HEK293 (cell line): ENCODE measurements at regions of chr3 and their contacts with region 1.

Region 1: DNA sequence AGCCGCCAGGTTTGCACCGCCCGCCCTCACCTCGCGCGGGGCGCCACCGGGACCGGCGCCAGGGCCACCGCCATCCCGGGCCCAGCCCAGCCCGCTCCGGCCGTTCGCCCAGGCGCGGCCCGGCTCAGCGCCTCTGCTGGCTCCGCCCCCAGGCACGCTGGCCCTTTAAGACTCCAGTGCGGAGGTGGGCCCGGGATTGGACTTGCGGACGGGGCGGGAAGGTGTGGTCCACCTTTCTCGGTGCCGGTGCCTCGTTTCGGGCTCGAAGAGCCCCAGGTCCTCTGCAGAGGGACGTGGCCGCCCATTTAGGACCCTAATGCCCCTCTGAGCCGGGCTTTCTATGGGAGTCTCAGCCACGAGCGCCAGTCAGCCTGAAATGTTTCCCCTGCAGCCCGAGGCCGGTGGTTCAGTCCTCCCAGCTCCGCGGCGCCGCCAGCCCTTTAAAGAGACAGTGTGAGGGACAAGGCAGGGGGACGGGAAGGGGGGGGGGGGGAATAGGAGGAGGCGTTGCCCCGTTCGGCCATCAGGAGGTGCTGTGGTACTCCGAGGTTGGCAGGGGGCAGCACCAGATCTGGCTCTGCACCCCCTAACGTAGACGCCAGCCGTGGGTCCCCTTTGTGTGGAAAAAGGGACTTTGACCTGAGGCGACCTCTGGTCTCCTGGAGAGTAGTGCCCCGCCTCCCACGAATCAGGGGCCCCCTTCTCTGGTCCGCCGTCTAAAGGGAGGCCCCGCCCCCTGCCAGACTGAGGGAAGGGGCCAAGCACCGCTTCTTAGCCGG is 1.0 kb downstream of the HYAL2 start:
- H3K4me3 ChIP-seq: peak overlapping the region; percentile 62
- H3K27ac ChIP-seq: peak overlapping the region; percentile 95
- H3K4me1 ChIP-seq: peaks cover 7% of the 10 kb centered on the region; the same call in 1 of the 2 replicates
- CTCF ChIP-seq: peak; percentile 65

Region 2: DNA sequence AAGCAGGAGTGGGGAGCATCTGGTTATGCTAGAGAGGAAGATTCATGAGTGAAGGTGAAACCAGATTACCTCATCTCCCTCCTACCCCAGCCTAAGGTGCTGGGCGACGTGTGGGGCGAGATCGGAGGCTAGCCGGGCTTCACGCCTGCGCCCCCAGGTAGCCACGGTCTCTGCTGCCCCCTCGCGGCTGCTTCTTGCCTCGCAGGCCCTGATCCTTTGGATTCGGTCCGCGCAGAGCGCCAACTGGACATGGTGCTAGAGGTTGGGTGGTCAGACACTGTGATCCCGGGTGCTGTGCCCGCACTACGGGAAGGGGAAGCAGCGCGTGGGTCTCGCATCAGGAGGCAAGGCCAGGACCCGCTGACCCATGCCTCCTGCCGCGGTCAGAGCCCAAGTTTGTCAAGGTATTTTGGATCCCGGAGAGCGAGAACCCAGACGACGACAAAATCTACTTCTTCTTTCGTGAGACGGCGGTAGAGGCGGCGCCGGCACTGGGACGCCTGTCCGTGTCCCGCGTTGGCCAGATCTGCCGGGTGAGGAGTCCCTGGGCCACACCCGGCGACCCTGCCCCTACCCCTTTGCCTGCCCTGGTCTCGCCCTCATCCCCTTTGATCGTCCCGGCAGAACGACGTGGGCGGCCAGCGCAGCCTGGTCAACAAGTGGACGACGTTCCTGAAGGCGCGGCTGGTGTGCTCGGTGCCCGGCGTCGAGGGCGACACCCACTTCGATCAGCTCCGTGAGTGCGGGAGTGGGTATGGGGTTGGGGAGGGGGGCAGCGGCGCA is 48.4 kb before region 1 on chr3:
- CTCF ChIA-PET with region 1: interaction called, 21 read pairs
- POLR2A ChIA-PET with region 1: no interaction called
- H3K4me3 ChIP-seq: no peak overlapping the region
- H3K27ac ChIP-seq: no peak overlapping the region
- H3K4me1 ChIP-seq: no peaks in the 10 kb centered on the region
- CTCF ChIP-seq: peak; percentile 94

Region 3: GRCh38 chr3:50278868-50279224 is 42.7 kb before region 1 on chr3 and contains the start of gene LSMEM2:
- CTCF ChIA-PET with region 1: interaction called, 21 read pairs
- POLR2A ChIA-PET with region 1: no interaction called
- H3K4me3 ChIP-seq: no peak within 1 kb of the TSS
- H3K27ac ChIP-seq: no peak within 1 kb of the TSS
- H3K4me1 ChIP-seq: no peaks in the 10 kb centered on the region
- CTCF ChIP-seq: no peak

Region 4: DNA sequence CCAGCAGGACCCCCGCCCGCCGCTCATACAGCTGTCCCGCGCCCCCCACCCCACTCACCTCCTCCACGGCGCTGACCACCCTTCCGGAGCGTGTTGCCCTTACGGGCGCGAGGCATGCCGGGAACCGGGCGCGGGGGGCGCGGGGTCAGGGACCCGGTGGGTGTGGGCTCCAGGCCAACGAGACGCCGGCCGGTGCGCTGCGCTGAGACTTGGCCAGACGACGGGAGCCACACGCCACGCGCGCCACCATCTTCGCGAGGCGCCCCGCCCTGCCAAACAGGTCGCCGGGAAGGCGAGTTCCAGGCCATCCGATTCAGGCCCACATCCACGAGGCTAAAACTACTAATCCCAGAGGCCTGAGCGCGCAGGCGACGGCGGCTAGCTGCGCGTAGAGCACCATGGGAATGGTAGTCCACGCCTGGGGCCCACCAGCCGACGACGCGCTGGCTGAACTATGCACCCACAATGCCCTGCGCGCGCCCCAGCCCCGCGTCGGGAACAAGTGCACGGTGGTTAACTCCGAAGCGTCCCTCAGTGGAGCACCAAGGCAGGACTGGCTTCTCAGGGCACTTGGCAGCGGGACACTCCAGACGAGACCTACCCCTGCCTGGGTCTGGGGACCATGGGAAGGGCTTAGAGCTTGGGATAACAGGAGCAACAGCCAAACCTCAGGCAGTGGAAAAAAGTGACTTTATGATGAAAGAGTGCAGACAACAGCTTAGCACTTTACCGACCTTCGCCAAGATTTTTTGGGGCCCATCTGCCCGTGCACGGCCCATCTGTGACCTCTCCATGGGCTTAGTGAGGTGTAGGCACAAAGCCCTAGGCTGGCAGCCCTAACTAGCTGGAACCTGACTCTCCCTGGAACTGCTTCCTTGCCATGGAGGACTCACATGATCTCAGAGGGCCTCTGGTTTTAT is 29.1 kb before region 1 on chr3 and contains the start of gene IFRD2:
- CTCF ChIA-PET with region 1: interaction called, 4 read pairs
- POLR2A ChIA-PET with region 1: interaction called, 12 read pairs
- H3K4me3 ChIP-seq: peak within 1 kb of the TSS; percentile 80
- H3K27ac ChIP-seq: peak within 1 kb of the TSS; percentile 77
- H3K4me1 ChIP-seq: no peaks in the 10 kb centered on the region
- CTCF ChIP-seq: no peak

Region 5: DNA sequence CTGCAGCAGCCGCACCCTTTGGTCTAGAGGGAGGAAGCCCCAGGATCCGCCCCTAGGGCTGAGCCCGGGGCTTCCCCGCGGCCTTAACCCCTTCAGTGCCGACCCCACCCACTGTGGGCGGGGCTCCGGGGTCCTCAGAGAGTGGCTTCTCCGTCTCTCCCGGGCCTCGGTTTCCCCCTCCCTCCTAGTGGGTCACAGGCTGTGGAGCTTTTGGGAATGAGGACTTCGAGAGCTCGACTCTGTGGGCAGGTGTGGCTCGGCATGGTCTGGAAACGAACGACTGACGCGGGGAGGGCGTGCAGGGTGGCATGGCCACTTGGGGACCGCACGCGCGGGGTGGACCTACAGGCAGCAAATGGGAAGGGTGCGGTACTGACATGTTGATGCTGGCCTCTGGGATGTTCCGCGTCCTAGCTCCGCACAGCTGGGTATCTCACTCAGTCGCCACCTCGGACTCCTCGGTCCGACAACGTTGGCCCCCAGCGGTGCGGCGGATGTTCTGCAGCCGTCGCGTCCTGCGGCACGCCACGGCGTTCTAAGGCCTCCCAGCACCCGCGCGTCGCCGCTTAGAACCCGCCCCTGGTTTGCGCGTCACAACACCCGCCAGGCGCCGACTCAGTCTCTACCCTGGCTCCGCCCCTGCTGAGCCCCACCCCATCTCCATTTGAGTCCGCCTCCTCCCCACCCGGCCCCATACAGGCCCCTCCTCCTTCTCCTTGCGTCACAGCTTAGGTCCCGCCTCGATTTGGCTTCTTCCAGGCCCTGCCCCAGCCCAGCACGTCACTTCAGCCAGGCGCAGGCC is 22.5 kb before region 1 on chr3 and contains the starts of genes HYAL3 and NAA80:
- CTCF ChIA-PET with region 1: interaction called, 7 read pairs
- POLR2A ChIA-PET with region 1: interaction called, 12 read pairs
- H3K4me3 ChIP-seq: peak within 1 kb of the TSS; percentile 69
- H3K27ac ChIP-seq: peak within 1 kb of the TSS; percentile 56
- H3K4me1 ChIP-seq: no peaks in the 10 kb centered on the region
- CTCF ChIP-seq: peak; percentile 85; the same call in 1 of the 2 replicates